ENCODE measurements at regions of chr17 and their contacts with region 1.

Region 1: GRCh38 chr17:15999439-16000350 is at the starts of genes TTC19 and ZSWIM7:
- DNase-seq: peak; percentile 96
- ATAC-seq: peak; percentile 89 to 92
- H3K4me3 ChIP-seq: peak within 1 kb of the TSS; percentile 81 to 96 (median 84)
- H3K27ac ChIP-seq: peak within 1 kb of the TSS; percentile 89 to 94 (median 94)
- H3K4me1 ChIP-seq: peaks cover 11 to 21% of the 10 kb centered on the region in 2 donors
- H3K27me3 ChIP-seq: no peaks in the 10 kb centered on the region
- CTCF ChIP-seq: peak in 1 of 5 experiments; percentile 17
- POLR2A ChIP-seq: peak; percentile 99
- total RNA-seq, gene TTC19: 31.0 to 56.4 (median 41.8) TPM
- total RNA-seq, gene ZSWIM7: 13.2 to 19.5 (median 19.1) TPM

Region 2: DNA sequence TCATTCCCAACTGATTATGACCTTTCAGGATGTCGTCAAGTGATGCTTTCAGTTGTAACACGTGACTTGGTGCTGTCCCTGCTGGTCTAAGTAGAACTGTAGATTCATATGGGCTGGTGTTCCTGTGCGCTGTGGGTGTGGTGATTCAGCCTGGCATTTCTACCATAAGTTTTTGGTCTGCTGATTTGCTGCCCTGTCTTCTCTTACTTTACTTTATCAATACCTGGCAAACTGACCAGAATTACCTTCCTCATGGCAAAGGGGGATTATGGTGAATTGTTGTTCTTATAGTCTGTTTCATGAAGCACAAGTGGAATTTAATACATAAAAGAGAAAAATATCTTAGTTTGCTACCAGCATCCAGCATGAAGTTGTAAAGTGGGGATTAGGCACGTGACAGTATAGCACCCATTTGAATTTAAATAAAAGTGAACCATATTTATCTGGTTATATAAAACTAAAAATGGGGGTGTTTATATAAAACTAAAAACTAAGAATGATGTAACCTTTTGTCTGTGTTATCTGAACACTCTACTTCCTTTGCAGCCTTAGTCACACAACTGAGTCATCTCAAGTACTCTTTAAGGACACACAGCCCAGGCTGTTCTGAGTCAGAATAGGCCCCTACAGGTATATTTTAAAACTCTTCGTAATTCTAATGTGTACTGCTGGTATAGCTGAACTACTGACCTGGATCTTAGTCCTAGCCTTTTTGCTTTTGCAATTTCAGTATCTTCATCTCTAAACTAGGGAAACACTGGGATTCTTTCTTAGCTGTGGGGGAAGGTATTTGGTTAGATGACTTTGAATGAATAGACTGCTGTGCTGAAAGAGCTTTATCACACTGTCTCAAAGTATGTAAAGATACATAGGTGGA is 28.3 kb after region 1 on chr17:
- in situ Hi-C with region 1: no loop called
- intact Hi-C with region 1: no loop called
- DNase-seq: peak; percentile 18 to 41
- ATAC-seq: peak; percentile 94 to 96
- H3K4me3 ChIP-seq: no peak overlapping the region
- H3K27ac ChIP-seq: peak overlapping the region; percentile 65 to 78 (median 70)
- H3K4me1 ChIP-seq: peaks cover 13 to 22% of the 10 kb centered on the region in 2 donors
- H3K27me3 ChIP-seq: no peaks in the 10 kb centered on the region
- CTCF ChIP-seq: no peak
- POLR2A ChIP-seq: no peak

Region 3: GRCh38 chr17:16215273-16215964 is 215.7 kb after region 1 on chr17 and contains the start of gene NCOR1:
- in situ Hi-C with region 1: no loop called
- intact Hi-C with region 1: loop called (anchors 5 kb)
- DNase-seq: peak; percentile 87 to 90
- ATAC-seq: peak; percentile 88 to 89
- H3K4me3 ChIP-seq: peak within 1 kb of the TSS; percentile 87 to 100 (median 94)
- H3K27ac ChIP-seq: peak within 1 kb of the TSS; percentile 93 to 97 (median 96)
- H3K4me1 ChIP-seq: peaks cover 47% of the 10 kb centered on the region in 2 donors
- H3K27me3 ChIP-seq: no peaks in the 10 kb centered on the region
- CTCF ChIP-seq: peak in 2 of 5 experiments; percentile 47 to 49
- POLR2A ChIP-seq: peak; percentile 76 to 79
- total RNA-seq, gene NCOR1: 122 to 152 (median 132) TPM

Region 4: DNA sequence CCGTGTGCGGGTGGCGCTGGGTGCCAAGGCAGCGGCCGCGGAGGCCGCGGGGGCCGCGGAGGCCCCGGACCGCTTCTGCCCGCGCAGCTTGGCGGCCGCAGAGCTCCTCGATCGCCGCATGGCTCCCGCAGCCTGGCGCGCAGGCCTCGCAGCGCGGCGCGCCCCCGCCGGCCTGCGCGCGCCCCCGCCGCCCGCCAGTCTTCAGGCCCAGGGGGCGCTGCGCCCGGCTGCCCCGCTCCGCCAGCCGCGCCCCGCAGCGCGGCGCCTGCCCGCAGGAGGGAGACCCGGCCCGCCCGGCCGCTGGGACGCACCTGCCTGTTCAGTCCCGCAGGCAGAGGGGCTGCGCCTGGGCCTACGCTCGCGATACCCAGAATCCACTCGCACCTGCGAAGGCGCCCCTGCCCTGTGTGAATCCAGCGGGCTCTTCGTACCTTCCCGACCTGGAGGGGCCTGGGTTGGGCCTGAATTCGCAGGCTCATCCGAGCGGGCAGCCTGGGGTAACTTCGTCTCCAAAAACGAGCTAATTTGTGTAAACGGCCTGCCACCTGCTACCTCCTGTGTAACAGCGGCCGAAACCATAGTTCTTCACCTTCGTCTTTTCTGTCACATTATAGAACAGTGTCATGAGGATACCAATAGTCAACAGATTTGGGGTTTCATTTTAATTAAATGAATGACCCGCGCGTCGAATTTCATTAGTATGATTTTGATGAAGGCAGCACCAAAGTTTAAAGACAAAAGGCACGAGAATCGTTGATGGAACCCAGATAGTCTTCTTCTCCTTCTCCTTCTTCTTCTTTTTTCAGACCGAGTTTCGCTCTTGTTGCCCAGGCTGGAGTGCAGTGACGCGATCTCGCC is 353.9 kb after region 1 on chr17 and contains the start of gene CENPV:
- in situ Hi-C with region 1: no loop called
- intact Hi-C with region 1: loop called (anchors 10 kb)
- DNase-seq: peak in 1 of 2 donors; percentile 27
- ATAC-seq: peak; percentile 72 to 84
- H3K4me3 ChIP-seq: peak within 1 kb of the TSS; percentile 72 to 91 (median 75)
- H3K27ac ChIP-seq: peak within 1 kb of the TSS; percentile 46 to 65 (median 54)
- H3K4me1 ChIP-seq: peaks cover 11 to 15% of the 10 kb centered on the region in 2 donors
- H3K27me3 ChIP-seq: no peaks in the 10 kb centered on the region
- CTCF ChIP-seq: peak in 2 of 5 experiments; percentile 13 to 35
- POLR2A ChIP-seq: peak in 1 of 2 donors; percentile 34
- total RNA-seq, gene CENPV: 18.3 to 39.4 (median 28.5) TPM